Activated naive CD8-positive, alpha-beta T cell treated with anti-CD3 and anti-CD28 coated beads, Interleukin-2, amount 10 ng/mL, durations not matched to agents 7 days and 5 days (primary cell): ENCODE measurements at regions of chr14 and their contacts with region 1.

Region 1: GRCh38 chr14:23120541-23121251 is 1.6 kb upstream of the CEBPE start:
- DNase-seq: peak; percentile 82
- ATAC-seq: peak; percentile 53
- H3K4me3 Mint-ChIP-seq: peak overlapping the region; percentile 65
- H3K27ac Mint-ChIP-seq: peak overlapping the region; percentile 96
- H3K4me1 Mint-ChIP-seq: peaks cover 28% of the 10 kb centered on the region
- H3K27me3 Mint-ChIP-seq: no peaks in the 10 kb centered on the region

Region 2: DNA sequence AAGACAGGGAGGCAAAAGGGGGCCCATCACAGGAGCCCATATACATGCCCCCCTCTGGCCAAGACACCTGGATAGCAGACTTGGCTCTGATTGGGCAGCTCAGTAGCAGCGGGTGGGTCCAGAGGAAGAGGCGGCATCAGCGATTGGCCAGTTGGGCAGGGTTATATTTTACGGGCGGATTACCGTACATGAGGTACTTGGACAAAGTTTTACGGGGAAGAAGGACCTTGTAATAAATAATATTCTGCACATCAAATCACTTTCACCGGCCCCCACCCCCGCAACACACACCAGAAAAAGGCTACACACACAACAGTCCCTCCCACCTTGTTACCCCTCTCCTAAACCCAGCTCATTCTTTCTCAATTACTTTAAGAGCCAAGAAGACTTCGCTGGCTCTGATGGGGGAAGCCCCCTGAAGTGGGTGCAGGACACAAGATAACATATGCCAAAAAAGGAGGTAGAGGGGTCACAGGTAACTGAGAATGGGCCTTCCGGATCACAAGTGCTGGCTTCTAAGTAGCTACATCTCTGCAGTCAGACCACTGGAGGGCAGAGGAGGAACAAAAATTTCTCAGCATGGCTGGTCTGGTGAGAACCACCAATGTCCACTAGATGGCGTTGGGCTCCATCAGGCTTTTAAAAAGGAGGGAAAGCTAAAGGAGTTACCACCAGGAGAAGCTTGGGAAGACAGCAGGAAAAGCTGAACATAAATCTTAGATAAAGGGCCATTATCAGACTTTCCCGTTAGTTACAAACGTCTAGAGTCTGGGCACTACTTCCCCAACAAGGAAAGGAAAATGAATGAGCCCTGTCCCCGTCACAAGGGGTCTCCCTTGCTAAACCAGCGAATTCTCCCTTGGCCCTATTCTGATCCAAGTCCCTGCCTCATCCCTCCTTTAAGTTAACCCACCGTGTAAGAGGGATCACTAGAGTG is 52.0 kb before region 1 on chr14:
- POLR2A ChIA-PET with region 1: interaction called, 11 read pairs
- DNase-seq: no peak
- ATAC-seq: peak; percentile 71
- H3K4me3 Mint-ChIP-seq: peak overlapping the region; percentile 41
- H3K27ac Mint-ChIP-seq: peak overlapping the region; percentile 31
- H3K4me1 Mint-ChIP-seq: peaks cover 13% of the 10 kb centered on the region
- H3K27me3 Mint-ChIP-seq: no peaks in the 10 kb centered on the region

Region 3: DNA sequence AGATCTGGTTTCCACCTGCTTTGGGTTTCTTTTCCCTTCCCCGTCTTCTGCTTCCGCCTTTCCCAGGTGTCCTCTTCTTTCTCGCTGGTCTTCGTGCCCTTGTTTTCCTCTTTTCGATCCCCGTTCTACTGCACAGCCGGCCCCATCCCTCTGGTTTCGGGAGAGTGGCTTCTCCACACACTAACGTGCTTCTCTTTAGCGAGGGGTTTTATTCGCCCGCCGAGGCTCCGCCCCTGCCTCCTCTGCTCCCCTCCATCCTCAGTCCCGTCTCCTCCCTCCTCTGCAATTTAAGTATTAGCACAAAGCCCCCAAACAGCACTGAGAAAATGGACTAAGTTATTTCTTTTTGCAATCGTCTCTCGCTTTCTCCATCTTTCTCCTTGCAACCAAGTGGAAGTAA is 62.8 kb after region 1 on chr14 and contains the start of gene SLC7A8:
- POLR2A ChIA-PET with region 1: interaction called, 17 read pairs
- DNase-seq: peak; percentile 41
- ATAC-seq: peak; percentile 65
- H3K4me3 Mint-ChIP-seq: no peak within 1 kb of the TSS
- H3K27ac Mint-ChIP-seq: no peak within 1 kb of the TSS
- H3K4me1 Mint-ChIP-seq: peaks cover 7% of the 10 kb centered on the region
- H3K27me3 Mint-ChIP-seq: peaks cover 24% of the 10 kb centered on the region
- total RNA-seq, gene SLC7A8: 1.8 to 3.1 TPM

Region 4: DNA sequence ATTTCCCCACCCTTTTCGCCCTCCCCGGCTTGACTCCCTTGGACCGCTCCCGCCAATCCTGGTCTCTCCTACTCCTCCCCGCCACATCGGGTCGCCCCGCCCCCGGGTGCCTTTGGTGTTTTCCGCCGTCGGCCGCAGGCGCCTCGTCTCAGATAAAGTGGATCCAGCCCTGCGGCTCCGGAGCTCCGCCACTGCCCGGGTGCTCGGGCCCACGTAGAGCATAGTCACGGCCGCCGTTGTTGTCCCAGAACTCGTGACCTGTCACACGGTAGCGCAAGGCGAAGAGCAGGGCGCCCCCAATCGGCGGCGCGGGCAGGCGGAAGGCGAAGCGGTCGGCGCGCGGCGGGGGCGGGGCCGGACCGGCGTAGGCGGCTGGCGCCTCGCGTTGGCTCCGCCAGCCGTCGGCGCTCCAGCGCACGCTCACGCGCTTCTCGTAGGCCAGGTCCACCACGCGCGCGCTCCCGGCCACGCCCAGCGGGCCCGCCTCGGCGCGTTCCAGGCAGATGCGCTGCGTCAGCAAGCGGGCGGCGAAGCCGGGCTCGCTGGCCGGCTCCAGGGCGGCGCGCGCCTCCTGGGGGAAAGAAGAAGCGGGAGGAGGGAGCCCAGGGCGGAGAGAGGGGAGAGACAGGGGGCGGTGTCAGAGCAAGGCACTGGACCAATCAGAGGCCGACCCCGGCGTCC is 180.7 kb after region 1 on chr14:
- POLR2A ChIA-PET with region 1: interaction called, 15 read pairs
- DNase-seq: peak; percentile 100
- ATAC-seq: peak; percentile 83
- H3K4me3 Mint-ChIP-seq: peak overlapping the region; percentile 96
- H3K27ac Mint-ChIP-seq: peak overlapping the region; percentile 97
- H3K4me1 Mint-ChIP-seq: peaks cover 17% of the 10 kb centered on the region
- H3K27me3 Mint-ChIP-seq: peaks cover 7% of the 10 kb centered on the region